ENCODE measurements at regions of chr18 and their contacts with region 1.

Region 1: DNA sequence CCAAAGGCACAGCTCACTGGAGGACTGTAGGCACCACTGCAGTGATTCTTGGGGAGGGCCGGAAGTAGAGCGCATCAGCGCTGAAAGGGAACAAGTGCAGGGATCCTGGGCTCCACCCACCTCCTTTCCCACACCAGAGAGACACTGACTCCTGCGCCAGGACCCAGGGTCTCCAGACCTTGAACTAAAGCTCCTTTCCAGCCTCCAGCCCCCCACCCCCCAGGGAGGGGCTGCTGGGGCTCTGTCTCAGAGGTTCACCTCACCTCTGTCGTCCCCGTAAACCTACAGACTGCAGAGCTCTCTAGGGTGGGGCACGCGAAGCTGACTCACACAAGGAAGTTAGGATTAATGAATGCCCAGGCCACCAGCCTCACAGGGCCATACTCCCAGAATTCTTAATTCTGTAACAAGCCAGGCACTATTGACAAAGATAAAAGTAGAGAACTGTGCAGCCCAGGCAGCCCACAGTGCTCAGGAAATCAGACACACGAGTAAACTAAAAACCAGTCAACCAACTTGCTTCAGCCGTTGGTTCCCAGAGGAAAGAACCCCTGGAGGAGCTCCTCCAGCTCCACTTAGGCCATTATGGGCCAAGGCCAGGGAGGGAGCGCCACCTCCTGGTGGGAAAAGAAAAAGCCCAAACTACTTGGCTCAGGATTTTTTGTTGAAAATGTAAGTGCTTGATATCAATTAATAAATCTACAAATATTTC is 45.1 kb upstream of the ACAA2 start:
- DNase-seq: peak in 7 of 10 donors; percentile 43 to 74 (median 66)
- H3K4me3 ChIP-seq: no peak overlapping the region
- H3K27ac ChIP-seq: no peak overlapping the region
- H3K27me3 ChIP-seq: no peaks in the 10 kb centered on the region
- CTCF ChIP-seq: peak; percentile 84 to 97 (median 93)

Region 2: GRCh38 chr18:48827291-48828193 is 1030.9 kb before region 1 on chr18:
- intact Hi-C with region 1: no loop called
- DNase-seq: peak in 7 of 10 donors; percentile 16 to 42 (median 34)
- H3K4me3 ChIP-seq: peak overlapping the region in 13 of 59 donors; percentile 4 to 29 (median 13)
- H3K27ac ChIP-seq: peak overlapping the region in 38 of 59 donors; percentile 1 to 78 (median 52)
- H3K27me3 ChIP-seq: no peaks in the 10 kb centered on the region
- CTCF ChIP-seq: no peak

Region 3: DNA sequence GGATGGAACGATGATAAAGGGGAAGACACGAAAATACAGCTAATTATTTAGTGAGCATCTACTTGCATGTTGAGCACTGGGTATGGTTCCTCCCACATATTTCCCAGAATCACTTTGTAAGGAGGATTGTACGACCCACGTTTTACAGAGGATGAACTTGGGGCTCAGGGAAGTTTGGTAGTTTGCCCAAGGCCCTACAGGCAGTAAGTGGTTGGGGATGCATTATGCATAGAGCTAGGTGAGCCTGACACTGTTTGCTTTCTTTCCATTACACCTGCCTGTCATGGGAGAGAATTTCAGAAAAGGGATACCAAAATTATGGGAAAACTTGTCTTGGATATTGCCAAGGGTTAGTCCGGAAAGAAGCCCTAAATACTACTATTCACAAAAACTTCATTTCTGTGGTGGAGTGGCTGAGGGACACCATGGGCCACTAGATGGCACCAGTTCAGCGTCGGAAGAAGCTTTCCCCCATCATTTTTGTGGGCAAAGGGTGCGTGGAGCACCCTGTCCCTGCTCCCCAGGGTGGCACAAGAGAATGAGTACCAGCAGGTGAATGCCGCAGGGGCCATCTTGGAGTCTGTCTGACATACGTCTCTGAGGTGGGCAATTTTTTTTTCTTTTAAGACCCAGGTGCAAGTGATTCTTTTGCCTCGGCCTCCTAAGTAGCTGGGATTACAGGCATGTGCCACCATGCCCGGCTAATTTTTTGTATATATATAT is 347.9 kb before region 1 on chr18:
- intact Hi-C with region 1: loop called (anchors 1 to 5 kb)
- DNase-seq: peak in 8 of 10 donors; percentile 28 to 65 (median 37)
- H3K4me3 ChIP-seq: no peak overlapping the region
- H3K27ac ChIP-seq: no peak overlapping the region
- H3K27me3 ChIP-seq: no peaks in the 10 kb centered on the region
- CTCF ChIP-seq: peak; percentile 60 to 93 (median 79)

Region 4: DNA sequence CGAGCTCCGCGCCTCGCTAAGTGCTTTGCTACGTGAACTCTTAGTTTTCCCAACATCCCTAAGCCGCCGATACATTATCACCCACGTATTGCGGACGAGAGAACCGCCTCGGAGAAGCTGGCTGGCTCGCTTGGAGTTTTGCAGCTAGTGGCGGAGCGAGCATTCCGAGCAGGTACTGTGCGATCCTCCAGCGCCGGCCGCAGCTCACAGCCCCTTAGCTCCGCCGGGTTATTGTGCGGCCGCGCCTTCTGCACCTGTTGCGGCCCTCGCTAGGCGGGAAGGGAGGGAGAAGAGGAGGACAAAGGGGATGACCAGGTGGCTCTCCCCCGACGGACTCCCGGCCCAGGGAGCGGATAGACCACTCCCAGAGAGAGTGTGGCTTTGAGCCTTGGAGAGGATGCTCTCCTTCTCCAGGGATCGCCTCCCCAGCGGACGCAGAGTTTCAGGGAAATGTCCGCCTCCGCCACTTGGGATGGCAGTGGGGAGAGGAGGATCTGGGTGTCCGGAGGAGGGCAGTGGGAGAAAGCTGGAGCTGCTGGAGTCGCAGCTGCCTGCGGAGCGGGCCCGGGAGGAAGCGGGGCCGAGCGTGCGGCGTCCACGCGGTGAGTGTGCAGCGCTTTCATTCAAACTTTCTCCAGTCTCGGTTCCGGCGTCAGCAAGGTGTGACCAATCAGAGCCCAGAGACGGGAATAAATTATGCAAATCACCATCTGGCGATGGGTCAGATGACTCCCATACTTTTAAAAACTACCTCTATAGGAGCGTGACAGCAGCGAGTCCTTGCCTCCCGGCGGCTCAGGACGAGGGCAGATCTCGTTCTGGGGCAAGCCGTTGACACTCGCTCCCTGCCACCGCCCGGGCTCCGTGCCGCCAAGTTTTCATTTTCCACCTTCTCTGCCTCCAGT is 296.9 kb before region 1 on chr18 and contains the start of gene LIPG:
- intact Hi-C with region 1: loop called (anchors 2 to 5 kb)
- DNase-seq: peak in 2 of 10 donors; percentile 15 to 50
- H3K4me3 ChIP-seq: peak within 1 kb of the TSS; percentile 25 to 72 (median 49)
- H3K27ac ChIP-seq: no peak within 1 kb of the TSS
- H3K27me3 ChIP-seq: peaks cover 0 to 55% (median 33%) of the 10 kb centered on the region in 45 donors
- CTCF ChIP-seq: no peak
- total RNA-seq, gene LIPG: 0.18 to 8.5 (median 1.8) TPM

Region 5: DNA sequence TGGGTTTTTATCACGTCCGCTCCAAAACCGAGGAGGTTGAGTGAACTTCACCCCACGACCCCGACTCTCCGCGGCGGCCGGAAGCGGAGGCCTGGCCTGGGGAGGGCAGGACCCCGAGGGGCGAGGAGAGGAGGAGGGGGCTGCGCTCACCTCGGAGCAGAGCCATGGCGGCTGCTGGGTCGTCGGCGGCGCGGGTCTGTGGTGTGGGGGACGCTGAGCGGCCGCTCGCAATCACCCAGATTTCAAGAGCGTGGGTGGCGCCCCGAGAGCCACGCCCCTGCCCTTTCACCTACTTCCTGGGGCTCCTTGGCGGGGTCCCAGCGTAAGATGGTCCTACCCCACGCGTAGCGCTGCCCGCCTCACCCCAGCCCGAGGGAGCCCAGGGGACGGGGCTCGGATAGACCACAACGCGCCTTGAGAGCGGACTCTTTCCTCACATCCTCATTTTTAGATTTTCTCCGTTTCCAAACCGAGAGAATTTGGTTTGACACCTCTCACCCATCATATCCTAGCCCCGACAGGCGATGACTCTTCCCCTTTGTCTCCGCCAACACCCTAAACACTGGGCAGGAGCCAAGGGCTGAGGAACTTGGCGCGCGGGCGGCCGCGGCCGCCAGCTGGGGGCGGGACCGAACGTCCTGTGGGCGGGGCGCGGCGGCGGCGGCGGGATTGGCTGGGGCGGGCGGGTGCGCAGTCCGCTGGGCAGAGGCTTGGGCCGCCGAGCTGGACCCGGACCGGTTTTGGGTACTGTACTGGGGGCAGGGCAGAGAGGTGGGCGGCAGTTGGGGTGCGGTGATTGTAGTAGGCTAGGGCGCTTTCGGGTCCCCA is 44.9 kb before region 1 on chr18 and contains the start of gene ACAA2:
- intact Hi-C with region 1: loop called in 1 of 2 experiments (anchors 5 kb)
- DNase-seq: peak; percentile 74 to 90 (median 83)
- H3K4me3 ChIP-seq: peak within 1 kb of the TSS; percentile 68 to 98 (median 88)
- H3K27ac ChIP-seq: peak within 1 kb of the TSS; percentile 73 to 99 (median 95)
- H3K27me3 ChIP-seq: no peaks in the 10 kb centered on the region
- CTCF ChIP-seq: peak in 10 of 56 donors; percentile 7 to 45 (median 14)
- total RNA-seq, gene ACAA2: 19.4 to 71.0 (median 31.6) TPM